ENCODE measurements at regions of chr5 and their contacts with region 1.

Region 1: GRCh38 chr5:75336625-75337339 is at the start of gene HMGCR:
- DNase-seq: peak; percentile 91 to 99 (median 95)
- ATAC-seq: peak; percentile 90
- H3K4me3 ChIP-seq: peak within 1 kb of the TSS; percentile 82
- H3K4me3 Mint-ChIP-seq: no peak within 1 kb of the TSS
- H3K27ac ChIP-seq: peak within 1 kb of the TSS; percentile 64 to 88
- H3K27ac Mint-ChIP-seq: no peak within 1 kb of the TSS
- H3K4me1 ChIP-seq: peaks cover 5% of the 10 kb centered on the region
- H3K4me1 Mint-ChIP-seq: peaks cover 38% of the 10 kb centered on the region
- H3K27me3 ChIP-seq: no peaks in the 10 kb centered on the region
- H3K27me3 Mint-ChIP-seq: no peaks in the 10 kb centered on the region
- CTCF ChIP-seq: no peak
- total RNA-seq, gene HMGCR: 55.5 to 61.5 TPM

Region 2: GRCh38 chr5:73565139-73565968 is 1771.4 kb before region 1 on chr5 and contains the starts of genes ANKRA2 and UTP15:
- CTCF ChIA-PET with region 1: no interaction called
- POLR2A ChIA-PET with region 1: no interaction called
- intact Hi-C with region 1: loop called in 1 of 2 experiments (anchors 10 kb)
- DNase-seq: peak; percentile 96 to 100 (median 98)
- ATAC-seq: peak; percentile 92
- H3K4me3 ChIP-seq: peak within 1 kb of the TSS; percentile 81
- H3K4me3 Mint-ChIP-seq: peak within 1 kb of the TSS; percentile 93
- H3K27ac ChIP-seq: peak within 1 kb of the TSS; percentile 90 to 94
- H3K27ac Mint-ChIP-seq: peak within 1 kb of the TSS; percentile 95
- H3K4me1 ChIP-seq: peaks cover 14% of the 10 kb centered on the region
- H3K4me1 Mint-ChIP-seq: peaks cover 63% of the 10 kb centered on the region
- H3K27me3 ChIP-seq: no peaks in the 10 kb centered on the region
- H3K27me3 Mint-ChIP-seq: no peaks in the 10 kb centered on the region
- CTCF ChIP-seq: no peak
- total RNA-seq, gene ANKRA2: 45.0 to 45.1 TPM
- total RNA-seq, gene UTP15: 52.0 to 55.2 TPM

Region 3: DNA sequence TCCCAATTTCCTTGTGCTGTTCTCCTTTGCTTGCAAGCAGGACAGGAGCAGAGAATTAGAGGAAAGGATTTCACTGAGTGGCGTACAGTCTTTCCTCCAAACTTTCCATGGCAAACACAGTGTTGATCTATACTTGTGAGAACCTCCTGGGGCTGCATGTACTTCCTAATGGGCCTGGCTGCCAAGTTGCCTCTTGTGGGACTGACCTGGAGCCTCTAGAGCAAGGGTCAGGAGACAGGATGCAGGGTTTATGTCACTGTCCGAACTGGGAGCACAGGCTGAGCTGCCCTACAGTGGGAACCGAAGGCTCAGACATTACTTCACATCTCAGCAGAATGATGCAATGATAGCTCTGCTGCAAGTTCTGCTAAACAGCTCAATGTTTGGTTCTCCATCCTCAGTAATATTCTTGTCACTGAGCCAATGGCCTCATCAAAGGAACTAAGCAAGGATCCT is 798.5 kb before region 1 on chr5:
- CTCF ChIA-PET with region 1: no interaction called
- POLR2A ChIA-PET with region 1: no interaction called
- intact Hi-C with region 1: no loop called
- DNase-seq: peak in 3 of 14 experiments; percentile 3 to 43 (median 26)
- ATAC-seq: no peak
- H3K4me3 ChIP-seq: no peak overlapping the region
- H3K4me3 Mint-ChIP-seq: no peak overlapping the region
- H3K27ac ChIP-seq: no peak overlapping the region
- H3K27ac Mint-ChIP-seq: no peak overlapping the region
- H3K4me1 ChIP-seq: no peaks in the 10 kb centered on the region
- H3K4me1 Mint-ChIP-seq: no peaks in the 10 kb centered on the region
- H3K27me3 ChIP-seq: peaks cover 0 to 4% of the 10 kb centered on the region in 2 experiments
- H3K27me3 Mint-ChIP-seq: peaks cover 6% of the 10 kb centered on the region
- CTCF ChIP-seq: no peak

Region 4: DNA sequence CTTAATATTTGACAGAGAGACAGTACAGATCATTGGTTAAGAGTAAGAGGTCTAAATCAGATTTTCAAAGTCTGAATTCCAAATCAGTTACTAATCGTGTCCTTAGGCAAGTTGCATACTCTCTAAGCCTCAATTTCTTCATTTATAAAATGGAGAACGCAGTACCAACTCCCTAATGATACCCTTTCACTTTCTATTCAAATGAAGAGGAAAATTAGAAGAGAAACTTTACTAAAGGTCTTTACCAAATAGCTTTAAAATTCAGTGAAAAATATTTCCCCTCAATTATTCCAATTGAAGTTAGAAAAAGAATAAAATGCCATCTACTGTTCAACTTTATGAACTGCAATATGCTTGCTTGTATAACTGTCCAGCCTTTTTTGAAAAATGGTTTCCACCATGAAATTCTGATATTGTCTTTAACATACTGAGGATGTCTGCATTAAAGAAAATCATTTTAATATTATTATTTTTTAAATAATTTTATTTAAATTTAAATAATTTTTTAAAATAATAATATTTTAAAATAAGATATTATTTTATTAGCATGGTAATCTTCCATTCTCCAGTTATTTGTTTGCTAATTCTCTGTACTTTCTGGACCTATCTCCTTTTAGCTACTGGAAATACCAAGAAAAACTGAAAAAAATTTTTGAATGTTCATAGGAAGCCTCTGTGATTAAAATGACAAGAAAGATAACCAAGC is 344.5 kb after region 1 on chr5:
- CTCF ChIA-PET with region 1: no interaction called
- POLR2A ChIA-PET with region 1: no interaction called
- intact Hi-C with region 1: loop called in 1 of 2 experiments (anchors 10 kb)
- DNase-seq: peak in 3 of 14 experiments; percentile 58 to 61 (median 59)
- ATAC-seq: peak; percentile 38
- H3K4me3 ChIP-seq: no peak overlapping the region
- H3K4me3 Mint-ChIP-seq: no peak overlapping the region
- H3K27ac ChIP-seq: no peak overlapping the region
- H3K27ac Mint-ChIP-seq: no peak overlapping the region
- H3K4me1 ChIP-seq: no peaks in the 10 kb centered on the region
- H3K4me1 Mint-ChIP-seq: peaks cover 11% of the 10 kb centered on the region
- H3K27me3 ChIP-seq: no peaks in the 10 kb centered on the region
- H3K27me3 Mint-ChIP-seq: no peaks in the 10 kb centered on the region
- CTCF ChIP-seq: peak; percentile 82

Region 5: GRCh38 chr5:75717082-75717922 is 380.5 kb after region 1 on chr5 and contains the start of gene POC5:
- CTCF ChIA-PET with region 1: no interaction called
- POLR2A ChIA-PET with region 1: interaction called, 6 read pairs
- intact Hi-C with region 1: loop called in 1 of 2 experiments (anchors 5 kb)
- DNase-seq: peak; percentile 96 to 99 (median 98)
- ATAC-seq: peak; percentile 92
- H3K4me3 ChIP-seq: peak within 1 kb of the TSS; percentile 79
- H3K4me3 Mint-ChIP-seq: peak within 1 kb of the TSS; percentile 100
- H3K27ac ChIP-seq: peak within 1 kb of the TSS; percentile 71 to 82
- H3K27ac Mint-ChIP-seq: peak within 1 kb of the TSS; percentile 93
- H3K4me1 ChIP-seq: peaks cover 13% of the 10 kb centered on the region
- H3K4me1 Mint-ChIP-seq: peaks cover 42% of the 10 kb centered on the region
- H3K27me3 ChIP-seq: no peaks in the 10 kb centered on the region
- H3K27me3 Mint-ChIP-seq: no peaks in the 10 kb centered on the region
- CTCF ChIP-seq: no peak
- total RNA-seq, gene POC5: 5.7 to 6.2 TPM

Measured in CD4-positive, alpha-beta T cell (primary cell).